Sigmoid colon (tissue), 7 donors: ENCODE measurements at regions of chr12 and their contacts with region 1.

Region 1: GRCh38 chr12:98490501-98491453 is 24.6 kb upstream of the TMPO start:
- DNase-seq: peak; percentile 91
- H3K4me3 ChIP-seq: no peak overlapping the region
- H3K27ac ChIP-seq: peak overlapping the region; percentile 67 to 74 (median 72)
- H3K4me1 ChIP-seq: peaks cover 0 to 10% (median 7%) of the 10 kb centered on the region in 4 donors
- H3K27me3 ChIP-seq: no peaks in the 10 kb centered on the region
- CTCF ChIP-seq: peak; percentile 78 to 85 (median 82)
- EP300 ChIP-seq: no peak
- POLR2A ChIP-seq: no peak

Region 2: DNA sequence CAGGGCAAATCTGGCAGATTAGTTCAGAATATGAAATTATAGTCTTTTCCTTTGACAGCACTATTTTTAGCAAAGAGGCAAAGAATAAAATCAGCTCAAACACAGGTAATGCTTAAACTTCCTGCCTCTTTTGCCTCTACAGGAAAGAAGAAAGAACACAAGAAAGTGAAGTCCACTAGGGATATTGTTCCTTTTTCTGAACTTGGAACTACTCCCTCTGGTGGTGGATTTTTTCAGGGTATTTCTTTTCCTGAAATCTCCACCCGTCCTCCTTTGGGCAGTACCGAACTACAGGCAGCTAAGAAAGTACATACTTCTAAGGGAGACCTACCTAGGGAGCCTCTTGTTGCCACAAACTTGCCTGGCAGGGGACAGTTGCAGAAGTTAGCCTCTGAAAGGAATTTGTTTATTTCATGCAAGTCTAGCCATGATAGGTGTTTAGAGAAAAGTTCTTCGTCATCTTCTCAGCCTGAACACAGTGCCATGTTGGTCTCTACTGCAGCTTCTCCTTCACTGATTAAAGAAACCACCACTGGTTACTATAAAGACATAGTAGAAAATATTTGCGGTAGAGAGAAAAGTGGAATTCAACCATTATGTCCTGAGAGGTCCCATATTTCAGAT is 42.0 kb after region 1 on chr12:
- intact Hi-C with region 1: loop called (anchors 5 kb)
- DNase-seq: no peak
- H3K4me3 ChIP-seq: no peak overlapping the region
- H3K27ac ChIP-seq: no peak overlapping the region
- H3K4me1 ChIP-seq: no peaks in the 10 kb centered on the region
- H3K27me3 ChIP-seq: no peaks in the 10 kb centered on the region
- CTCF ChIP-seq: peak in 3 of 4 experiments; percentile 30 to 52 (median 41)
- EP300 ChIP-seq: no peak
- POLR2A ChIP-seq: no peak

Region 3: GRCh38 chr12:98572010-98572409 is 81.2 kb after region 1 on chr12:
- intact Hi-C with region 1: no loop called
- DNase-seq: no peak
- H3K4me3 ChIP-seq: no peak overlapping the region
- H3K27ac ChIP-seq: no peak overlapping the region
- H3K4me1 ChIP-seq: peaks cover 0 to 2% (median 0%) of the 10 kb centered on the region in 4 donors
- H3K27me3 ChIP-seq: no peaks in the 10 kb centered on the region
- CTCF ChIP-seq: no peak
- EP300 ChIP-seq: no peak
- POLR2A ChIP-seq: no peak